ENCODE measurements at regions of chr7 and their contacts with region 1.

Region 1: DNA sequence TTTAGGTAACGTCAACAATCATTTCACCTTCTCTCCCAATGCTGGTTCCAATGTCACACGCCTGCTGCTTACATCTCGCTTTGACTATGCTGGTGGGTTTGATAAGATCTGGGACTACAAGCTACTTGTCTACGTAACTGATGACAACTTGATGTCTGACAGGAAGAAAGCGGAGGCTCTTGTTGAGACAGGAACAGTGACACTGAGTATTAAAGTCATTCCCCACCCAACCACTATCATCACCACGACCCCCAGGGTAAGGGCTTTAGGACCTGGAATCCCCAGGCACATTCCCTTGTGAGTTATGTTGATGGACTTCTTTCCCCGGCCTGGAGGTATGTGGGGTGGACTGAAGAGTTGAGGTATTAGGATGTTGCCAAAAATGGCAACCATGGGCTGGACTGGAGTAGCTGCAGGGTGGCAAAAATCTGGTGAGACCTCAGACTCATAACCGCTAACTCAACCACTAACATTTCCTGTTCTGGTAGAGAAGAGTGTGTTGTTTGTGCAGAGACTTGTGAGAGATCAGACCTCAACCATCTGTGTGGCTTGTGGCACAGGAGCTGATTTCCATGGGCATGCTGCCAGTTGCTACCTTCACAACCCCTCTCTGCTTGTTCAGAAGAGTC is 59.2 kb downstream of the CDHR3 start:
- DNase-seq: peak; percentile 82
- H3K4me3 Mint-ChIP-seq: peak overlapping the region; percentile 19
- H3K27ac Mint-ChIP-seq: peak overlapping the region; percentile 62
- H3K4me1 Mint-ChIP-seq: peaks cover 71% of the 10 kb centered on the region
- H3K27me3 Mint-ChIP-seq: no peaks in the 10 kb centered on the region

Region 2: GRCh38 chr7:105678811-105679495 is 343.4 kb before region 1 on chr7:
- CTCF ChIA-PET with region 1: no interaction called
- intact Hi-C with region 1: loop called (anchors 1 kb)
- DNase-seq: peak; percentile 60
- H3K4me3 Mint-ChIP-seq: peak overlapping the region; percentile 82
- H3K27ac Mint-ChIP-seq: peak overlapping the region; percentile 86
- H3K4me1 Mint-ChIP-seq: peaks cover 59% of the 10 kb centered on the region
- H3K27me3 Mint-ChIP-seq: no peaks in the 10 kb centered on the region

Region 3: GRCh38 chr7:105769901-105770628 is 252.2 kb before region 1 on chr7:
- CTCF ChIA-PET with region 1: interaction called, 10 read pairs
- intact Hi-C with region 1: no loop called
- DNase-seq: peak; percentile 39
- H3K4me3 Mint-ChIP-seq: no peak overlapping the region
- H3K27ac Mint-ChIP-seq: no peak overlapping the region
- H3K4me1 Mint-ChIP-seq: peaks cover 26% of the 10 kb centered on the region
- H3K27me3 Mint-ChIP-seq: no peaks in the 10 kb centered on the region

Region 4: GRCh38 chr7:105849122-105849855 is 173.0 kb before region 1 on chr7:
- CTCF ChIA-PET with region 1: no interaction called
- intact Hi-C with region 1: loop called (anchors 1 kb)
- DNase-seq: peak; percentile 83
- H3K4me3 Mint-ChIP-seq: no peak overlapping the region
- H3K27ac Mint-ChIP-seq: no peak overlapping the region
- H3K4me1 Mint-ChIP-seq: peaks cover 44% of the 10 kb centered on the region
- H3K27me3 Mint-ChIP-seq: no peaks in the 10 kb centered on the region

Region 5: DNA sequence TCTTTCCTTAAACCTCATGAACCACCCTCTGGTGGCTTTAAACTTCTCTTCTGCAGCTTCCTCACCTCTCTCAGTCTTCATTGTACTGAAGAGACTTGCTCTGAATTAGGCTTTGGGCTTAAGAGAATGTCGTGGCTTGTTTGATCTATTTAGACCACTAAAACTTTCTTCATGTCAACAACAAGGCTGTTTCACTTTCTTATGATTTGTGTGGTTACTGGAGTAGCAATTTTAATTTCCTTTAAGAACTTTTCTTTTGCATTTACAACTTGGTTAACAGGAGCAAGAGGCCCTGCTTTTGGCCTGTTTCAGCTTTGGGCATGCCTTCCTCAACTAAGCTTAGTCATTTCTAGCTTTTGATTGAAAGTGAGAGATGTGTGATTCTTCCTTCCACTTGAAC is 97.4 kb before region 1 on chr7:
- CTCF ChIA-PET with region 1: no interaction called
- intact Hi-C with region 1: loop called (anchors 1 kb)
- DNase-seq: peak; percentile 60
- H3K4me3 Mint-ChIP-seq: no peak overlapping the region
- H3K27ac Mint-ChIP-seq: peak overlapping the region; percentile 9
- H3K4me1 Mint-ChIP-seq: peaks cover 26% of the 10 kb centered on the region
- H3K27me3 Mint-ChIP-seq: peaks cover 2% of the 10 kb centered on the region

Region 6: GRCh38 chr7:106273009-106273668 is 250.8 kb after region 1 on chr7:
- CTCF ChIA-PET with region 1: no interaction called
- intact Hi-C with region 1: no loop called
- DNase-seq: no peak
- H3K4me3 Mint-ChIP-seq: no peak overlapping the region
- H3K27ac Mint-ChIP-seq: peak overlapping the region; percentile 56
- H3K4me1 Mint-ChIP-seq: peaks cover 46% of the 10 kb centered on the region
- H3K27me3 Mint-ChIP-seq: no peaks in the 10 kb centered on the region